Heart right ventricle (tissue), 16 donors: ENCODE measurements at regions of chr1 and their contacts with region 1.

Region 1: DNA sequence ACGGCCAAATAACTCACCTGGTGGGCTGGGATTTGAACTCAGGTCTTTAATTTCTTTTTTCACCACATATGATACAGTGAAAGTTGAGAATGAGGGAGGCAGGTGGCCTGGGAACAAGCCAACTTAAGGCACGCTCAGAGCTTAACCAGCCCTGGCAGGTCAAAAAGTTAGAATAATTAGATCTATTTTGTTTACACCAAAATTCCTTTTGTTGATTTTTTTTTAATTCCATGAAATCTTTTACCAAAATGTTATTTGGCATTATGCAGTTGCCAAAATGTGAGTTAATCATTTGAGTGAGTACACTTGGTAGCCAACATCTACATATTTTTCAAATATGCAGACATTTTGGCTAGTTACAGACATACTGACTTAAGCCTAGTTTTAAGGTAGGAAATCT is 36.8 kb downstream of the LHX8 start:
- DNase-seq: no peak
- ATAC-seq: no peak
- H3K4me3 ChIP-seq: no peak overlapping the region
- H3K27ac ChIP-seq: no peak overlapping the region
- H3K4me1 ChIP-seq: no peaks in the 10 kb centered on the region
- H3K27me3 ChIP-seq: peaks cover 0 to 3% (median 0%) of the 10 kb centered on the region in 7 donors
- CTCF ChIP-seq: no peak

Region 2: DNA sequence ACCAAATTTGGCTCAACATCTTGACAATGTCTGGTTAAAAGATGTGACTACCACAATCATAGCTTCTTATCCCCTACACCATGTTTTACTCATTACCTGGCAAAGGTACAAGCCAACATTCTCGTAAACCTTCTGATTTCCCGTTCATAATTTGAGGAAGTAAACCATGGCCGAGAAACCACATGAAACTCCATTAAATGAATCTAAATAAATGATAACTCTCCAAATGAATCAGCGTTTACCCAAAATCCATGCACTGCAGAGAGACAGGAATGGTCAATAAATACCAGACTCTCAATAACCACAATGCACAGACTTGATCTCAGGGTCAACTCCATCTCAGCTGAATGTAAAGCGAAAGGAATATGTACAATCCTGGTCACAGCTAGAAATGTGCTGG is 312.8 kb before region 1 on chr1:
- intact Hi-C with region 1: no loop called
- DNase-seq: no peak
- ATAC-seq: no peak
- H3K4me3 ChIP-seq: no peak overlapping the region
- H3K27ac ChIP-seq: no peak overlapping the region
- H3K4me1 ChIP-seq: no peaks in the 10 kb centered on the region
- H3K27me3 ChIP-seq: no peaks in the 10 kb centered on the region
- CTCF ChIP-seq: no peak

Region 3: GRCh38 chr1:75152092-75152491 is 18.9 kb before region 1 on chr1:
- intact Hi-C with region 1: loop called in 1 of 10 experiments (anchors 1 kb)
- DNase-seq: no peak
- ATAC-seq: no peak
- H3K4me3 ChIP-seq: no peak overlapping the region
- H3K27ac ChIP-seq: no peak overlapping the region
- H3K4me1 ChIP-seq: no peaks in the 10 kb centered on the region
- H3K27me3 ChIP-seq: peaks cover 0 to 30% (median 0%) of the 10 kb centered on the region in 7 donors
- CTCF ChIP-seq: no peak